ENCODE measurements at regions of chr3 and their contacts with region 1.

Region 1: DNA sequence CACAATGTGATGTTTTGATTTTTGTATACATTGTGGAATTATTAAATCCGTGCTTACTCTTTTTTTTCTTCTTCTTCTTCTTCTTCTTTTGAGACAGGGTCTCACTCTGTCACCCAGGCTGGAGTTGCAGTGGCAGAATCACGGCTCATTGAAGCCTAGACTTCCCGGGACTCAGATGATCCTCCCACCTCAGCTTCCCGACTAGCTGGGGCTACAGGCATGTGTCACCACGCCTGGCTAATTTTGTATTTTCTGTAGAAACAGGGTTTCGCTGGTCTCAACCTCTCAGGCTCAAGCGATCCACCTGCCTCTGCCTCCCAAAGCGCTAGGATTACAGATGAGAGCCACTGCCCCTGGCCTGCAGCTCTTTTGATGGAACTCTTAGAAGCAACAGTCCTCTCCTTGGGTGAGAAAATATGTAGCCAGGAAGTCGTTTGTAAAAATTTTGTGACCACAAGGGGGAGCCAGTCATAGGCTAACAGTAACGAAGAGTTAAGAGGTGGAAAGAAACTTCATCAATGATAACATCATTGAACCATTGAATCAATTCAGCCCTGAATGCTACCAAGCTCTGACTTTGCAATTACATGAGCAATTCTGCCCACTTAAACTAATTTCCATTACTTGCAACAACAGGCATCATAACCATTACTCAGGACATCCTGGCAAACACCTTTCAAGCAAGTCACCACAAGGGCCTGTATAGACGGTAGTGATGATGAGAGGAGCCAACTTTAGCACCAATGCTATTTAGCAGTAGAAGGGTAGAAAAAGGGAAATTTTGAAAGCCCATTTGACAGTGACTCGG is 16.7 kb upstream of the CMTM7 start:
- DNase-seq: peak; percentile 88
- H3K4me3 Mint-ChIP-seq: no peak overlapping the region
- H3K27ac Mint-ChIP-seq: peak overlapping the region; percentile 69
- H3K4me1 Mint-ChIP-seq: peaks cover 35% of the 10 kb centered on the region
- H3K27me3 Mint-ChIP-seq: no peaks in the 10 kb centered on the region

Region 2: GRCh38 chr3:32296256-32297204 is 78.5 kb before region 1 on chr3:
- CTCF ChIA-PET with region 1: interaction called, 4 read pairs
- intact Hi-C with region 1: loop called (anchors 1 kb)
- DNase-seq: peak; percentile 80
- H3K4me3 Mint-ChIP-seq: peak overlapping the region; percentile 45
- H3K27ac Mint-ChIP-seq: peak overlapping the region; percentile 85
- H3K4me1 Mint-ChIP-seq: peaks cover 24% of the 10 kb centered on the region
- H3K27me3 Mint-ChIP-seq: no peaks in the 10 kb centered on the region

Region 3: DNA sequence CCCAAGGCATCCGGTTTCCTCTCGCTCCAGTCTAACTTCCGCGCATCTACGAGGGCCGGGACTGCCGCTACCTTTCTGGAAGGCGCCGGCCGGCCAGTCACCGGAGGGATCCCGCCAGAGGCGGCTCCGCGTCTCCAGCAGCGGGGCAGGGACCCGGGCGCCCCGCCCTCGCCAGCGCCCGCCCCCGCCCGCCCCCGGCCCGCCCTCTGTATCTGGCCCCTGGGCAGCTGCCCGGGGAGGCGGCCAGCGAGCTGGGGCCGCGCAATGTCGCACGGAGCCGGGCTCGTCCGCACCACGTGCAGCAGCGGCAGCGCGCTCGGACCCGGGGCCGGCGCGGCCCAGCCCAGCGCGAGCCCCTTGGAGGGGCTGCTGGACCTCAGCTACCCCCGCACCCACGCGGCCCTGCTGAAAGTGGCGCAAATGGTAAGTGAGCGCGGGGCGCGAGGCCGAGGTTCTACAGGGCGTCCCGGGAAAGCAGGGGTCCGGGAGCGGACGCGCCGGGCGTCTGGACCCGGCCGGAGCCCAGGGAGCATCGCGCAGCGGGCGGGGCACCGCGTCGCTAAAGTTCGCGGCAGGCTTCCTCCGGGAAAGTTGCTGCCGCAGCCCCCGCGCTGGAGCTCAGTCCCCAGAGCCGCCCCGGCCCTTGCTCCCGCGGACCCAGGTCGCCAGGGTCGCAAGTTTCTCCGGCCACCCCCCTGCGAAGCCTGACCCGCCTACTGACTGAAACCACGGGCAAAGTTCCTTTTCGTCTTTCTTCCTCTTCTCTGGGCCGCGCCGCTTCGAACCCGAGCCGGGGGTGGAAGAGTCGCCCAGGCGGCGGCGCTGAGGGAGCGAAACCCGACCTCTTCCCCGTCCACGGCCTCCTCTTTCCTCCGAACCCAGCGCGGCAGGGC is 16.9 kb after region 1 on chr3 and contains the start of gene CMTM7:
- CTCF ChIA-PET with region 1: interaction called, 48 read pairs
- intact Hi-C with region 1: loop called (anchors 1 kb)
- DNase-seq: peak; percentile 82
- H3K4me3 Mint-ChIP-seq: peak within 1 kb of the TSS; percentile 95
- H3K27ac Mint-ChIP-seq: peak within 1 kb of the TSS; percentile 93
- H3K4me1 Mint-ChIP-seq: peaks cover 54% of the 10 kb centered on the region
- H3K27me3 Mint-ChIP-seq: no peaks in the 10 kb centered on the region
- total RNA-seq, gene CMTM7: 59.1 to 60.2 TPM

Region 4: DNA sequence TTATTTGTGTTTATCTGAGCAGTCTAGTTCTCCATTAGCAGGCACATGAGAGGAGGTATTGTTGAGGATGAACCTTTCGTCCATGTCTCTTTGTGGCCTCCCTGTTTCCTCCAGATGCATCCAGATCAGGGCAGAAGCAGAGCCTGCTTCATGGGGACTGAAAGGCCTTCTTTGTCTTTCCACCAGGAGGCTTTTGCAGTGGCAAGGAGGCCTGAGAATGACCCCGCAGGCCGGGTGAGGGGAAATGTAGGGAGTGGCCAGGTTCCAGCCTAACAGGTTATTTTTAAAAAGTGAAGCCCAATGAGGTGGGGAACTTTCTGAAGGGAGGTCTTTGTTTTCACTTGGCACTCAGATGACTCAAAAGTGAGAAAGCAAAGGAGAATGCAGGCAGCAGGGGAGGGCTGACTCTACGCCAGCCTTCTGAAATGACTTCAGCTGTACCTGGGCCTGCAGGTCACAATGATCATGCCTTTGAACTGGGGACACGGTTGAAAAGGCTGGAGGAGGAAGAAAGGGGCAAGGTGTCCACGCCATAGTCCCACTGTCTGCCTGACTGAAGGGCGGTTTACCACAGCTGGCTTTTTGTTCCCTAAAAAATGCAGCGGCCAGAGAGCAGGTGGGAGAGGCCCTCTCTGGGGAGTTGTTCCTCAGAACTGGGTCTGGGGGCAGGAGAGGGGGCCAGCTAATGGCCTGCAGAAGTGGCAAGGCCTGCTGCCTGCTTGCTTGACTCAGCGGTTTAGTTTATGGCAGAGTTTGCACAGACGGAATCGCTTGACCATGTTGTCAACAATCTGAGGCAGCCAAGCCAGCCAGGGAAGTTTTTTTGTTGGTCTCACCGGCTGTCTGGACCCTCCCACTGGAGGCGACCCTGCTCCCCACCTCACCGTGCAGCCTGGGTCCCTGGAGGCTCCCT is 45.4 kb after region 1 on chr3:
- CTCF ChIA-PET with region 1: interaction called, 10 read pairs
- intact Hi-C with region 1: no loop called
- DNase-seq: peak; percentile 81
- H3K4me3 Mint-ChIP-seq: peak overlapping the region; percentile 66
- H3K27ac Mint-ChIP-seq: peak overlapping the region; percentile 94
- H3K4me1 Mint-ChIP-seq: peaks cover 92% of the 10 kb centered on the region
- H3K27me3 Mint-ChIP-seq: no peaks in the 10 kb centered on the region

Region 5: DNA sequence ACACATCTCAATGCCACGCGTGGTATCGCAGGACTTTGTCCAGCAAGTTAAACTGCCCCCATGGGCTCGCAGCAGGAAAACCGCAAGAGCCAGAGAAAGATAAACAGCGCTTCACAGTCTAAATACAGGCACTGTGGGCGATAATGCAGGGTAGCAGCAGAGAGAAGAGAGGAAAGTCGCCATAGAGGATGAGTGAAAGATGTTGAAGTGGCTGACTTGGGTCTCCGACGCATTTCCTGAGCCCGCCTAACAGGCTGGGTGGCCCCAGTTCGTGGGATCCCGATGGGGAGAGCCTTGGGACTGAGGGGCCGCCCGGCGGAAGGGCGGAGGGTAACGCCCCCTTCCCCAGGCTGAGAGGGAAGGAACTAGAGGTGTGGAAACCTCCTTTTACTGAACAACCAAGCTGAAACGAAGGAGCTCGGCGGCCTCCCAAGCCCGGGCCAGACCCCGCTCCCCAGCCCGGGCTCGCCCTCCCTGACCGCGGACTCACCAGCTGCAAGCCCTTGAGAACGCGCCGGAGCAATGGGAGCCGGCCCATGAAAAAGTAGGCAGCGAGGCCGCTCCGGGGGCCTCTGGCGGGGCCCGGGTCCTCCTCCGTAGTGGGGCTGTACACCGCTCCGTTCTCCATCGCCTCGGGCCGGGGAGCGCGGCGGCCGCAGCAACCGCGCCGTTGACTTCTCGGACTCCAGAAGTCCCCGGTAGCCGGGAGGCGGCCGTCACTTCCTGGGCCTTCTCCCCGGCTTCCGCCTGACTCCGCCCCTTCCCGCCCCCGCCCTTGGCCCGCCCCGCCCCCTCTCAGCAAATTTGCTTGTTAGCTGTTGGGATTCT is 127.3 kb after region 1 on chr3 and contains the start of gene CMTM6:
- CTCF ChIA-PET with region 1: interaction called, 7 read pairs
- intact Hi-C with region 1: loop called (anchors 1 kb)
- DNase-seq: peak; percentile 81
- H3K4me3 Mint-ChIP-seq: peak within 1 kb of the TSS; percentile 97
- H3K27ac Mint-ChIP-seq: peak within 1 kb of the TSS; percentile 89
- H3K4me1 Mint-ChIP-seq: peaks cover 27% of the 10 kb centered on the region
- H3K27me3 Mint-ChIP-seq: no peaks in the 10 kb centered on the region
- total RNA-seq, gene CMTM6: 43.7 to 44.3 TPM

Region 6: DNA sequence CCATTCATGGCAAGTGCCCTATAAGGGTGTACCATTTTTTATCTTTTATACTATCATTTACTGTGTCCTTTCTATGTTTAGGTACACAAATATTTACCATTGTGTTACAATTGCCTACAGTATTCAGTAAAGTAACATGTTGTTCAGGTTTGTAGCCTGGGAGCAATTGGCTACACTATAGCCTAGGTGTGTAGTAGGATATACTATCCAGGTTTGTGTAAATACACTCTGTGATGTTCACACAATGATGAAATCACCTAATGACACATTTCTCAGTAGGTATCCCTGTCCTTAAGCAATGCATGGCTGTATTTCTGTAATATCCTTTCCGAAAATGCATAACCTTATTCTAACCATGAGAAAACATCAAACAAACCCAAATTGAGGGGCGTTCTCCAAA is 292.1 kb after region 1 on chr3:
- CTCF ChIA-PET with region 1: no interaction called
- intact Hi-C with region 1: loop called (anchors 10 kb)
- DNase-seq: no peak
- H3K4me3 Mint-ChIP-seq: no peak overlapping the region
- H3K27ac Mint-ChIP-seq: no peak overlapping the region
- H3K4me1 Mint-ChIP-seq: no peaks in the 10 kb centered on the region
- H3K27me3 Mint-ChIP-seq: no peaks in the 10 kb centered on the region